SK-N-SH (cell line): ENCODE measurements at regions of chr7 and their contacts with region 1.

Region 1: GRCh38 chr7:128830231-128831177 is at the start of gene FLNC:
- DNase-seq: peak; percentile 90
- H3K4me3 ChIP-seq: peak within 1 kb of the TSS; percentile 68 to 90
- H3K27ac ChIP-seq: peak within 1 kb of the TSS; percentile 50 to 98
- H3K4me1 ChIP-seq: peaks cover 39 to 43% of the 10 kb centered on the region in 2 experiments; a peak in 3 of 4 replicates
- H3K27me3 ChIP-seq: no peaks in the 10 kb centered on the region
- CTCF ChIP-seq: no peak
- EP300 ChIP-seq: no peak
- RAD21 ChIP-seq: no peak
- polyA plus RNA-seq, gene FLNC: 22.5 and 43.7 TPM in 2 replicates

Region 2: DNA sequence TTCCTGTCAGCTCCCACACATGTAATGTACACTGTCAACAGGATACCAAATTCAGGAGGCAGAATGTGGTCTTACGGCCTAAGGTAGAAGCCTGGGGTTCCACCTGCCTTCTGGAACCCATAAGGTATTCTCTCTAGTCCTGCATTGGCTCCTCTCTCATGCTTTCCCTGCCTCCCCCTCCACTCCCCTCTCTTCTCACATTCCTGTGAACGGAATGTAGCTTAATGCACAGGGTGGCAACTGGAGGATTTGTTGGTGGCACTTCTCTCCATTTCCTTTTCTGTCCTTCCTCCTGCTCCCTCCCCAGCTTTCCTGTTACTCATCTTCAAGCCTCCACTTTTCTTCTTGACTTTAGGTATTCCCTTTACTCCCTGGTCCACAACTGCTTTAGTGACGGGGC is 11.8 kb before region 1 on chr7:
- CTCF ChIA-PET with region 1: interaction called, 10 read pairs
- POLR2A ChIA-PET with region 1: interaction called, 15 read pairs
- DNase-seq: no peak
- H3K4me3 ChIP-seq: no peak overlapping the region
- H3K27ac ChIP-seq: no peak overlapping the region
- H3K4me1 ChIP-seq: peaks cover 0 to 12% of the 10 kb centered on the region in 2 experiments; a peak in 1 of 4 replicates
- H3K27me3 ChIP-seq: no peaks in the 10 kb centered on the region
- CTCF ChIP-seq: no peak
- EP300 ChIP-seq: no peak
- RAD21 ChIP-seq: no peak

Region 3: GRCh38 chr7:128841921-128842651 is 11.6 kb after region 1 on chr7:
- CTCF ChIA-PET with region 1: interaction called, 14 read pairs
- POLR2A ChIA-PET with region 1: no interaction called
- DNase-seq: peak; percentile 87
- H3K4me3 ChIP-seq: no peak overlapping the region
- H3K27ac ChIP-seq: no peak overlapping the region
- H3K4me1 ChIP-seq: no peaks in the 10 kb centered on the region
- H3K27me3 ChIP-seq: no peaks in the 10 kb centered on the region
- CTCF ChIP-seq: peak; percentile 92
- EP300 ChIP-seq: no peak
- RAD21 ChIP-seq: peak; percentile 26; the same call in 1 of the 2 replicates

Region 4: DNA sequence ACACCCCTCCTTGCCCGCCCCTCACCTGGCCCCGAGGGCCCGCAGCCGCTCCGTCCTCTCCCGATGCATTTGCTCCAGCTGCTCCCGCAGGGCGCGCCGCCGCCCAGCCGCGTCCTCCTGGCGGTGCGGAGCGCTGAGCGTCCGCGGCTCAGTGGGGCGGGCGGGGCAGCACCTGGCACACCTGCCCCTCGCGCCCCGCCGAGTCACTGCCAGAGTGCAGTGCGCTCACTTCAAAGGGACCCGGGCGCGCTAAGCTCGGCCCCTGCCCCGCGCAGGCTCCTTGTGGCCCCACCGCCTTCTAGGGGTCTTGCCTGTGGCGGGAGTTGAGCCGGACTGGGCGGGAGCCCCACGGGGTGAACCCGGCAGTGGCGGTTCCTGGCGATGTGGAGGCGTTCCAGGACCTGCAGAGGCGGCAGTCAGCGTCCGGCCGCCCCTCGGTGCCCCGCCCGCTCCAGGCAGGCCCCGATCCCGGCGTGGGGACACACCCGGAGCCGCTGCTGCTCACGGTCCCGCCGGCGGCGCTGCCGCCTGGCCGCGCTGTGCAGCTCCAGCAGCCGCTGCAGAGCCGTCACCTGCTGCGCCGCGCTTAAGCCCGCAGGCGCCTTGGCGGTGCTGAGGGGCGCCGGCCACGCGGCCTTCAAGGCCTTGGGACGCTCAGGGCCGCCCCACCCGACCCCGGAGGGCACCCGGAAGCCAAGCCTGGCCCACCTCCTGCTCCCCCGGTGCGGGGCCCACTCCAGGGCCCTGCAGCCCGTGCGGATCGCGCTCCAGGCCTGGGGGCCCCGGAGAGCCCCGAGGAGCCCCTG is 38.8 kb after region 1 on chr7:
- CTCF ChIA-PET with region 1: interaction called, 10 read pairs
- POLR2A ChIA-PET with region 1: no interaction called
- DNase-seq: peak; percentile 87
- H3K4me3 ChIP-seq: peak overlapping the region; percentile 50 to 56
- H3K27ac ChIP-seq: no peak overlapping the region
- H3K4me1 ChIP-seq: peaks cover 0 to 18% of the 10 kb centered on the region in 2 experiments; a peak in 1 of 4 replicates
- H3K27me3 ChIP-seq: no peaks in the 10 kb centered on the region
- CTCF ChIP-seq: peak; percentile 44
- EP300 ChIP-seq: no peak
- RAD21 ChIP-seq: no peak; the same call in 1 of the 2 replicates

Region 5: GRCh38 chr7:129262324-129262723 is 431.8 kb after region 1 on chr7:
- CTCF ChIA-PET with region 1: no interaction called
- POLR2A ChIA-PET with region 1: no interaction called
- DNase-seq: no peak
- H3K4me3 ChIP-seq: no peak overlapping the region
- H3K27ac ChIP-seq: no peak overlapping the region
- H3K4me1 ChIP-seq: no peaks in the 10 kb centered on the region
- H3K27me3 ChIP-seq: no peaks in the 10 kb centered on the region
- CTCF ChIP-seq: no peak
- EP300 ChIP-seq: no peak
- RAD21 ChIP-seq: no peak